GM12878 (cell line): ENCODE measurements at regions of chr7 and their contacts with region 1.

Region 1: GRCh38 chr7:140810830-140811556 is 113.7 kb downstream of the BRAF start:
- DNase-seq: peak; percentile 51
- ATAC-seq: peak; percentile 100
- H3K4me3 ChIP-seq: no peak overlapping the region
- H3K27ac ChIP-seq: no peak overlapping the region
- H3K4me1 ChIP-seq: no peaks in the 10 kb centered on the region
- H3K27me3 ChIP-seq: no peaks in the 10 kb centered on the region
- CTCF ChIP-seq: peak; percentile 55 to 72 (median 70); a peak in 5 of 6 replicates
- EP300 ChIP-seq: no peak
- POLR2A ChIP-seq: no peak
- RAD21 ChIP-seq: peak; percentile 74

Region 2: DNA sequence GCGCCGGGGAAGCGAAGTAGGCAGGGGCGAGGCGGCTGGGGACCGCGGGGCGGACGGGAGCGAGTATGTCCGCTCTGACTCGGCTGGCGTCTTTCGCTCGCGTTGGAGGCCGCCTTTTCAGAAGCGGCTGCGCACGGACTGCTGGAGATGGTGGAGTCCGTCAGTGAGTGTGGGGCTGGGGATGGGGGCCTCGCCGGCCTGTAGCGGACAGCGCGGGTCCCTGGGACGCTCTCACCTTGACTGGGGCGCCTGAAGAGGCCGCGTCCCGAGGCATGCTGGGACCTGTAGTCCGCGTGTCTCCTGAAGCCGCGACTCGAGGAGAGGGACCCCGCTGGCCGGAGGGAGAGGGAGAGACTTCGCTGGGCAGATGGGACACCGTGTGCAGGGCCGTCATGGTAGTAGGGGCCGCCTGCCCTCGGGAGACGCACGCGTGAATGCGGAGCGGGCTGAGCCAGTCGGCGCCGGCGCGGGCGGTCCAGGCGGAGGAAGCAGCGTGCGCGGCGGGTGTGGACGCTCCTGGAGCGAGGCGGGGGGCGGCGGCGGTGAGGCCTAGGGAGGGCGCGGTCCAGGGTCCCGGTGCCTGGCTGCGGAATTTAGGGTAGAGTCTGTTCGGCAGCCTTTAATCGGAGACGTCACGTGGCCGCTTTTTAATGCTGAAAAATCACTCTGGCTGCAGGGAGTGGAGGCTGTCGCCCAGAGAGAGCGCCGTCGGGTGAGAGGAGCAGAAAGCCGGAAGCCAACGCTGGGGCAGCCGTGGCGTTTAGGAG is 114.1 kb before region 1 on chr7 and contains the start of gene NDUFB2:
- CTCF ChIA-PET with region 1: no interaction called
- POLR2A ChIA-PET with region 1: no interaction called
- RAD21 ChIA-PET with region 1: no interaction called
- SMC1A ChIA-PET with region 1: no interaction called
- in situ Hi-C with region 1: no loop called
- intact Hi-C with region 1: no loop called
- DNase-seq: peak; percentile 57
- ATAC-seq: peak; percentile 93
- H3K4me3 ChIP-seq: peak within 1 kb of the TSS; percentile 77
- H3K27ac ChIP-seq: peak within 1 kb of the TSS; percentile 90
- H3K4me1 ChIP-seq: peaks cover 11% of the 10 kb centered on the region
- H3K27me3 ChIP-seq: no peaks in the 10 kb centered on the region
- CTCF ChIP-seq: no peak
- EP300 ChIP-seq: no peak
- POLR2A ChIP-seq: peak; percentile 95
- RAD21 ChIP-seq: no peak
- polyA plus RNA-seq, gene NDUFB2: 1,189 to 1,236 TPM

Region 3: DNA sequence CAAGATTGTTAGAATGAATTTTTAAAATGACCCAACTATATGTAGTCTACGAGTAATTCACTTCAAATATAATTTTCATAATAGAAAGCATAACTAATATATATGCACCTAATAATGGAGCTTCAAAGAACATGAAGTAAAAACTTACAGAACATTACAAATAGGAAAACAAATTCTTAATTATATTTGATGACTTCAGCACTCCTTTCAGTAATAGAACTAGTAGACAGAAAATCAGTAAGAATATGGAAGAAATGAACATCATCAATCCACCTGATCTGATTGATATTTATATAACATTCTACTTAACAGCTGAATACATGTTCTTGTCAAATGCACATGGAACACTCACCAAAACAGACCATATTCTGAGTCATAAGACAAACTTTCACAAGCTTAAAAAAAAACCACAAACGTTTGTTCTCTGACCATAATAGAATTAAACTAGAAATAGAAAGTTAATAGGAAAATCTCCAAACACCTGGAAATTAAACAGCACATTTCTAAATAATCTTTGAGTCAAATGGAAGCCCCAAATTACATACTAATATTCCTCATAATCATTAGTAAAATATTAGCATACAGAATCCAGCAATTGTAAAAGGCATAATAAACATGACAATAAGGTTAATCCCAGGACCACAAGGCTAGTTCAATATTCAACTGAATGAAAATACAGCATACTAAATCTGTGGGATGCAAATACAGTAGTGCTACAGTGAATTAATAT is 65.7 kb after region 1 on chr7:
- CTCF ChIA-PET with region 1: interaction called, 11 read pairs
- POLR2A ChIA-PET with region 1: interaction called, 3 read pairs
- RAD21 ChIA-PET with region 1: interaction called, 8 read pairs
- SMC1A ChIA-PET with region 1: interaction called, 8 read pairs
- in situ Hi-C with region 1: no loop called
- intact Hi-C with region 1: no loop called
- DNase-seq: peak; percentile 47
- ATAC-seq: peak; percentile 83
- H3K4me3 ChIP-seq: no peak overlapping the region
- H3K27ac ChIP-seq: no peak overlapping the region
- H3K4me1 ChIP-seq: peaks cover 19% of the 10 kb centered on the region
- H3K27me3 ChIP-seq: no peaks in the 10 kb centered on the region
- CTCF ChIP-seq: no peak
- EP300 ChIP-seq: peak; percentile 55 to 63; a peak in 3 of 4 replicates
- POLR2A ChIP-seq: no peak
- RAD21 ChIP-seq: no peak

Region 4: GRCh38 chr7:140924019-140924820 is 113.2 kb after region 1 on chr7:
- CTCF ChIA-PET with region 1: interaction called, 23 read pairs
- POLR2A ChIA-PET with region 1: interaction called, 3 read pairs
- RAD21 ChIA-PET with region 1: interaction called, 25 read pairs
- SMC1A ChIA-PET with region 1: interaction called, 10 read pairs
- in situ Hi-C with region 1: no loop called
- intact Hi-C with region 1: loop called (anchors 5 kb)
- DNase-seq: peak; percentile 50
- ATAC-seq: peak; percentile 89
- H3K4me3 ChIP-seq: peak overlapping the region; percentile 98
- H3K27ac ChIP-seq: peak overlapping the region; percentile 94
- H3K4me1 ChIP-seq: no peaks in the 10 kb centered on the region
- H3K27me3 ChIP-seq: no peaks in the 10 kb centered on the region
- CTCF ChIP-seq: peak; percentile 44 to 60 (median 45)
- EP300 ChIP-seq: peak in 1 of 2 experiments; percentile 42; a peak in 1 of 4 replicates
- POLR2A ChIP-seq: peak; percentile 75
- RAD21 ChIP-seq: no peak

Region 5: GRCh38 chr7:140983802-140984201 is 172.8 kb after region 1 on chr7:
- CTCF ChIA-PET with region 1: interaction called, 51 read pairs
- POLR2A ChIA-PET with region 1: interaction called, 4 read pairs
- RAD21 ChIA-PET with region 1: interaction called, 6 read pairs
- SMC1A ChIA-PET with region 1: interaction called, 18 read pairs
- in situ Hi-C with region 1: no loop called
- intact Hi-C with region 1: no loop called
- DNase-seq: no peak
- ATAC-seq: no peak
- H3K4me3 ChIP-seq: no peak overlapping the region
- H3K27ac ChIP-seq: no peak overlapping the region
- H3K4me1 ChIP-seq: no peaks in the 10 kb centered on the region
- H3K27me3 ChIP-seq: no peaks in the 10 kb centered on the region
- CTCF ChIP-seq: peak in 1 of 3 experiments; percentile 37; a peak in 2 of 6 replicates
- EP300 ChIP-seq: no peak
- POLR2A ChIP-seq: no peak
- RAD21 ChIP-seq: peak; percentile 53

Region 6: GRCh38 chr7:141001122-141001521 is 190.1 kb after region 1 on chr7:
- CTCF ChIA-PET with region 1: interaction called, 11 read pairs
- POLR2A ChIA-PET with region 1: no interaction called
- RAD21 ChIA-PET with region 1: interaction called, 3 read pairs
- SMC1A ChIA-PET with region 1: interaction called, 6 read pairs
- in situ Hi-C with region 1: no loop called
- intact Hi-C with region 1: no loop called
- DNase-seq: no peak
- ATAC-seq: 0 out of 3 replicates have a peak, but pooled peaks have one; percentile 36
- H3K4me3 ChIP-seq: no peak overlapping the region
- H3K27ac ChIP-seq: no peak overlapping the region
- H3K4me1 ChIP-seq: no peaks in the 10 kb centered on the region
- H3K27me3 ChIP-seq: no peaks in the 10 kb centered on the region
- CTCF ChIP-seq: no peak
- EP300 ChIP-seq: no peak
- POLR2A ChIP-seq: no peak
- RAD21 ChIP-seq: no peak

Region 7: DNA sequence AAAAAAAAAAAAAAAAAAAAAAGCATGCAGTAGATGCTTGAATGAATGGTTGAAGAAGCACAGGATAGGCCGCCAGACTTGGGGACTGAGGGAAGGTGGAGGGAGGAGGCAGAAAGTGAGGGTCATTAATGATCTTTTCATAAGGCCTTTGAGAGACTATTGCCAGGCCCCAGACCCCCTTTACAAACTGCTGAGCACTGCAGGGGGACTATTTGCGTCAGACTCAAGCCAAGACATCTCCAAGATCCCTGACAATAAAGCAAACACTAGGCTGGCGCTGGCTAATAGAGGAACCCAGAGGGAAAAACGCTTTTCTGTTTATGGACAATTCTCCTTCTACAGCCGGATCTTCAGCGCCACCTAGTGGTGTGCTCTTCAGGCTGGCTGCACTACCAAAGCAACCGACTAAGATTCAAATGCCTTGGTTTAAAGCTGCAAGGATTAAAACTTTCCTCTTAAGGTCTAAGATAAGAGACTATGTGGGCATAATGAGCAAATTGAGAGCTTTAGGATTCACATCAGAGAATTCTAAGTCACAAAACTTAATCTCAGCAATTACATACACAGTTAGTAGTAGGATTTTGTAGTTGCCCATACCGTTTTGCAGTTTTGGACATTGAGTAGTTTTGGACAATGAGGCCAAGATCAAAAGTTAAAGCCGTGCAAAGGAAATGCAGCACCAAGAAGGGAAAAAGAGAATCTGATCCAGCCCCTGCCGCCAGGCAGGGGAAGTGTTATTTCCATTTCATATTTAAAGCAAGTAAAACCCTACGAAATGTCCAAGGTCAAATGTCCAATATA is 722.4 kb after region 1 on chr7:
- CTCF ChIA-PET with region 1: interaction called, 3 read pairs
- POLR2A ChIA-PET with region 1: no interaction called
- RAD21 ChIA-PET with region 1: interaction called, 6 read pairs
- SMC1A ChIA-PET with region 1: interaction called, 3 read pairs
- in situ Hi-C with region 1: loop called (anchors 25 kb)
- intact Hi-C with region 1: loop called (anchors 5 kb)
- DNase-seq: no peak
- ATAC-seq: peak; percentile 89
- H3K4me3 ChIP-seq: no peak overlapping the region
- H3K27ac ChIP-seq: no peak overlapping the region
- H3K4me1 ChIP-seq: no peaks in the 10 kb centered on the region
- H3K27me3 ChIP-seq: no peaks in the 10 kb centered on the region
- CTCF ChIP-seq: peak; percentile 88 to 97 (median 95)
- EP300 ChIP-seq: no peak
- POLR2A ChIP-seq: no peak
- RAD21 ChIP-seq: peak; percentile 90